BJ (cell line): ENCODE measurements at regions of chr3 and their contacts with region 1.

Region 1: GRCh38 chr3:14439579-14440518 is 37.4 kb downstream of the SLC6A6 start:
- DNase-seq: no peak
- H3K4me3 ChIP-seq: no peak overlapping the region
- H3K27me3 ChIP-seq: no peaks in the 10 kb centered on the region
- CTCF ChIP-seq: no peak

Region 2: GRCh38 chr3:14178247-14179113 is 261.4 kb before region 1 on chr3 and contains the starts of genes LSM3 and XPC:
- CTCF ChIA-PET with region 1: no interaction called
- POLR2A ChIA-PET with region 1: interaction called, 20 read pairs
- DNase-seq: peak; percentile 92
- H3K4me3 ChIP-seq: peak within 1 kb of the TSS; percentile 97
- H3K27me3 ChIP-seq: no peaks in the 10 kb centered on the region
- CTCF ChIP-seq: no peak
- polyA plus RNA-seq, gene LSM3: 2.7 and 8.7 TPM in 2 replicates
- polyA plus RNA-seq, gene XPC: 36.0 and 36.9 TPM in 2 replicates

Region 3: DNA sequence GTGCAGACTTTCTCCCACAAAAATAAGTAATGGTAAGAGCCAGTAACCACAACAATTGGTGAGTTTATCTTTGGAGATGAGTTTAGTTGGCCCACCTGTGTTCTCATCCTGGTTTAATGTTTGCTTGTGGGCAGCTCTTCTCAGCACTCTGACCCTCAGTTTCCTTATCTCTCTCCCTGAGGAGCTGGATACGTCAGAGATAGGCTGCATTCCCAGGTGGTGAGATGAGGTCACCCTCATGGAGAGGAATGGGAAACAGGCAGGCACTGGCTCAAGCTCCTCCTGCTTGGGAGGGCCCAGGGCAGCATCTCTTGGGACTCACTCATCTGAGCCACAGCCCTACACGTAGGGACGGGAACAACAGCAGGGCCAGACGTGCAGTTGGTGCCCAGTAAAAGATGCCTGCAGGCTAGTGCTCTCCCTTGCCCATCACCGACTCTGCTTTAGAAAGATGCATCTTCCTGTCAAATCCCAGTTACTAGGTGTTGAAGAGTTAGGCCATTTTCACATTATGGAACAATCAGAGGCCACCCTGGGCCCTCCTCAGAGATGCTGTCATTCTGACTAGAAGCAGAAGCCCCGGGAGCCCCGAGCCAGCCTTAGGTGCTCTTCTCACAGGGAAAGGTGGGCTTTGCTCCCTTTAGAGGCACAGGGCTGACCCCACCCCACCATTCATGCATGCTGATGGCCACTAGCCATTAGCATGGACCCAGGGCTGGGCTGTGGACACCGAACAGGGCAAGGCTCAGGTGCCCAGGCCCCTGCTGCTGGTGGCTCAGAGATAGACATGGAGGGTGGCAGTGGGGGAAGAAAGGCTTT is 40.6 kb after region 1 on chr3:
- CTCF ChIA-PET with region 1: no interaction called
- POLR2A ChIA-PET with region 1: no interaction called
- DNase-seq: no peak
- H3K4me3 ChIP-seq: no peak overlapping the region
- H3K27me3 ChIP-seq: no peaks in the 10 kb centered on the region
- CTCF ChIP-seq: no peak